ENCODE measurements at regions of chr7 and their contacts with region 1.

Region 1: GRCh38 chr7:92134271-92135051 is at the start of gene CYP51A1:
- DNase-seq: peak; percentile 87 to 97 (median 94)
- ATAC-seq: peak; percentile 86
- H3K4me3 ChIP-seq: peak within 1 kb of the TSS; percentile 72 to 94
- H3K4me3 Mint-ChIP-seq: peak within 1 kb of the TSS; percentile 100
- H3K27ac ChIP-seq: peak within 1 kb of the TSS; percentile 88 to 93
- H3K27ac Mint-ChIP-seq: peak within 1 kb of the TSS; percentile 100
- H3K4me1 ChIP-seq: peaks cover 11% of the 10 kb centered on the region
- H3K4me1 Mint-ChIP-seq: peaks cover 32% of the 10 kb centered on the region
- H3K27me3 ChIP-seq: no peaks in the 10 kb centered on the region
- H3K27me3 Mint-ChIP-seq: no peaks in the 10 kb centered on the region
- CTCF ChIP-seq: no peak
- total RNA-seq, gene CYP51A1: 44.3 to 44.4 TPM

Region 2: DNA sequence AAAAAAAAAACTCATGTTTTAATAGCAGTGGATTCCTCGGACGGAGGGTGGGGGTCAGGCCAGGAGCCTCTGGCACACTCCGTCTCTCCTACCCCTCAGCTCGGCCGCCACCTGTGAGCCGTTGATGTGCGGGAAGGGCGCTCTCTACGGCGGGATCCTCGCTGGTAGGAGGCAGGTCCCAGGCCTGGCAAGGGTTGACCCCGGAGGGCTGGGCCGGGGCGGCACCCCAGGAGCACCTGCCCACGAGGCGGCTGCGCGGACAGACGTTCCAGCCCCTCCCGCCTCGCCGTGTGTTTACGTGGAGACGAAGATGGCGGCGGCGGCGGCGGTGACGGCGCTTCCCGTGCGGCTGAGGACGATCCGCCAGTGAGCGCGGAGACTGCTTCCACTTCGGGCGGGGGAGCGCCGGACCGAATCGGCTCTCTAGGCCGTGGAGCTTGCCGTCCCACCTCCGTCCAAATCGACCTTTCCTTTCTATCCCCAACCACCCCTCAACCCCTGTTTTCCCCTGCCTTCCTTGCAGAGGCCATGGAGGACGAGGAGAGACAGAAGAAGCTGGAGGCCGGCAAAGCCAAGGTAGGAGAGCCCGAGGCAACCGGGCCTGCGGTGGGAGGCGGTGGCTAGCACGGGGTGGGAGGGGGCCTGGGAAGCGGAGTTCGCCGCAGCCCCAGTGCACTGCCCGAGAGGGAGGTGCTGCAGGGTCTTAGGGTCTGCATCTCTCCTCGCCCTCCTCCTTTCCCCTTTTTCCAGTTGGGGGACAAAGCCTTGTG is 193.7 kb before region 1 on chr7 and contains the start of gene AKAP9:
- CTCF ChIA-PET with region 1: no interaction called
- POLR2A ChIA-PET with region 1: interaction called, 7 read pairs
- intact Hi-C with region 1: loop called (anchors 1 to 2 kb)
- DNase-seq: peak; percentile 71 to 93 (median 89)
- ATAC-seq: peak; percentile 84
- H3K4me3 ChIP-seq: peak within 1 kb of the TSS; percentile 78 to 92
- H3K4me3 Mint-ChIP-seq: peak within 1 kb of the TSS; percentile 93
- H3K27ac ChIP-seq: peak within 1 kb of the TSS; percentile 91 to 93
- H3K27ac Mint-ChIP-seq: peak within 1 kb of the TSS; percentile 96
- H3K4me1 ChIP-seq: peaks cover 21% of the 10 kb centered on the region
- H3K4me1 Mint-ChIP-seq: peaks cover 45% of the 10 kb centered on the region
- H3K27me3 ChIP-seq: no peaks in the 10 kb centered on the region
- H3K27me3 Mint-ChIP-seq: no peaks in the 10 kb centered on the region
- CTCF ChIP-seq: no peak
- total RNA-seq, gene AKAP9: 61.2 to 61.3 TPM

Region 3: GRCh38 chr7:92245487-92246362 is 111.3 kb after region 1 on chr7 and contains the starts of genes ANKIB1 and KRIT1:
- CTCF ChIA-PET with region 1: no interaction called
- POLR2A ChIA-PET with region 1: interaction called, 4 read pairs
- intact Hi-C with region 1: loop called (anchors 1 to 2 kb)
- DNase-seq: peak; percentile 65 to 93 (median 88)
- ATAC-seq: peak; percentile 74
- H3K4me3 ChIP-seq: peak within 1 kb of the TSS; percentile 86 to 90
- H3K4me3 Mint-ChIP-seq: peak within 1 kb of the TSS; percentile 98
- H3K27ac ChIP-seq: peak within 1 kb of the TSS; percentile 93 to 98
- H3K27ac Mint-ChIP-seq: peak within 1 kb of the TSS; percentile 99
- H3K4me1 ChIP-seq: peaks cover 29% of the 10 kb centered on the region
- H3K4me1 Mint-ChIP-seq: peaks cover 52% of the 10 kb centered on the region
- H3K27me3 ChIP-seq: no peaks in the 10 kb centered on the region
- H3K27me3 Mint-ChIP-seq: no peaks in the 10 kb centered on the region
- CTCF ChIP-seq: no peak
- total RNA-seq, gene ANKIB1: 51.1 to 59.6 TPM
- total RNA-seq, gene KRIT1: 25.0 to 27.0 TPM

Region 4: GRCh38 chr7:92584996-92585395 is 450.5 kb after region 1 on chr7:
- CTCF ChIA-PET with region 1: no interaction called
- POLR2A ChIA-PET with region 1: interaction called, 3 read pairs
- intact Hi-C with region 1: loop called (anchors 1 to 5 kb)
- DNase-seq: peak in 2 of 9 experiments; percentile 28 to 53
- ATAC-seq: peak; percentile 21
- H3K4me3 ChIP-seq: no peak overlapping the region
- H3K4me3 Mint-ChIP-seq: peak overlapping the region; percentile 37
- H3K27ac ChIP-seq: peak overlapping the region in 1 of 2 experiments; percentile 13
- H3K27ac Mint-ChIP-seq: peak overlapping the region; percentile 89
- H3K4me1 ChIP-seq: peaks cover 40% of the 10 kb centered on the region
- H3K4me1 Mint-ChIP-seq: peaks cover 80% of the 10 kb centered on the region
- H3K27me3 ChIP-seq: no peaks in the 10 kb centered on the region
- H3K27me3 Mint-ChIP-seq: no peaks in the 10 kb centered on the region
- CTCF ChIP-seq: no peak

Region 5: GRCh38 chr7:92838934-92839333 is 704.5 kb after region 1 on chr7:
- CTCF ChIA-PET with region 1: no interaction called
- POLR2A ChIA-PET with region 1: no interaction called
- intact Hi-C with region 1: loop called in 1 of 2 experiments (anchors 2 kb)
- DNase-seq: no peak
- ATAC-seq: no peak
- H3K4me3 ChIP-seq: no peak overlapping the region
- H3K4me3 Mint-ChIP-seq: no peak overlapping the region
- H3K27ac ChIP-seq: no peak overlapping the region
- H3K27ac Mint-ChIP-seq: no peak overlapping the region
- H3K4me1 ChIP-seq: peaks cover 9% of the 10 kb centered on the region
- H3K4me1 Mint-ChIP-seq: peaks cover 16% of the 10 kb centered on the region
- H3K27me3 ChIP-seq: peaks cover 0 to 3% of the 10 kb centered on the region in 2 experiments
- H3K27me3 Mint-ChIP-seq: peaks cover 4% of the 10 kb centered on the region
- CTCF ChIP-seq: no peak